PC-3 (cell line): ENCODE measurements at regions of chr5 and their contacts with region 1.

Region 1: DNA sequence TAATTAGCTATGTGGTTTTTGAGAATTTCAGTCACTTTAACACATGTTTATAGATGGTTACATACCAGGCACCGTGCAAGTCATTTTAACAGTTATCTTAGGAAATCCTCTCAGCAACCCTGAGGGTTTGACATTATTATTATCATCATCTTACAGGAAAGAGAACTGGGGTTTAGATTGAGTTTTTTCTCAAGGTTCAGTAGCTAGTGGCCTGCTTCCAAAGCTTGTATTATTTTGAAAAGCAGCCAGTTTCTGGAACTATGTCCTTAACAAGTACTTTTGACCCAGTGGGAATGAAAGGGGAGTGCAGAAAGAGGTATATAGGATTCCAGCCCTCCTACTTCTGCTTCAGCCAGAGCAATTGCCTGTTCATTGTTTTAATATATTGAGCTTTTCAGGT is 157.5 kb downstream of the COMMD10 start:
- DNase-seq: no peak
- ATAC-seq: no peak
- H3K4me3 ChIP-seq: no peak overlapping the region
- H3K27ac ChIP-seq: no peak overlapping the region
- H3K4me1 ChIP-seq: no peaks in the 10 kb centered on the region
- H3K27me3 ChIP-seq: no peaks in the 10 kb centered on the region
- CTCF ChIP-seq: no peak

Region 2: GRCh38 chr5:116492016-116492623 is 249.8 kb after region 1 on chr5:
- CTCF ChIA-PET with region 1: no interaction called
- POLR2A ChIA-PET with region 1: no interaction called
- intact Hi-C with region 1: loop called (anchors 10 kb)
- DNase-seq: peak; percentile 92
- ATAC-seq: peak; percentile 93
- H3K4me3 ChIP-seq: no peak overlapping the region
- H3K27ac ChIP-seq: peak overlapping the region; percentile 24; the same call in 1 of the 2 replicates
- H3K4me1 ChIP-seq: peaks cover 52% of the 10 kb centered on the region
- H3K27me3 ChIP-seq: no peaks in the 10 kb centered on the region
- CTCF ChIP-seq: no peak